GM12878 (cell line): ENCODE measurements at regions of chr3 and their contacts with region 1.

Region 1: DNA sequence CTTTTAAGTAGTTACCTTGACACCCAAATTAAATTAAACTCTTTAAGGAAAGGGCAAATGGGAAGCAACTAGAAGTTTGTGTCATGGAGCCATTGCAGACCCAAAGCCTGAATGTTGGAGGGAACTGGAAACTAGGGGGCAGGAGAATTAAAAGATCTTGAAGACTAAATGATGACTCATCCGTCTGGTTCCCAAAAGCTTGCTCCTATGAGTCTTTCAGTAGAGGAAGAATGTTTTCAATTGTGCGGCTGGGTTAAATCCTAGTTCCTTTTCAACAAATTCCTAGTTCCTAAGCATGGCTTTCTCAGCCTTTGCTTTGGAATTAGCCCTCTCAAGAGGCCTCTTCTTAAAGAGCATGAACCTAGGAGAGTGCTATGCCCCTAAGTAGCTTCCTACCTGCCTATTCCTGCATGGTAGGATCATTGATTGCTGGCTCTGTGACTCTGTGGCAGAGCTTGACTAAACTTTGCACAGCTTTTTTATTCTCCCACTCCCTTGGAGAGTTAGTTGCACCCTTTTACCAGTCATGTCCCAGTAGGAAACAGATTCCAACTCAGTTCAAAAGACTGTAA is 17.7 kb downstream of the CLEC3B start:
- DNase-seq: no peak
- ATAC-seq: no peak
- H3K4me3 ChIP-seq: no peak overlapping the region
- H3K27ac ChIP-seq: no peak overlapping the region
- H3K4me1 ChIP-seq: peaks cover 12% of the 10 kb centered on the region
- H3K27me3 ChIP-seq: no peaks in the 10 kb centered on the region
- CTCF ChIP-seq: no peak
- EP300 ChIP-seq: no peak
- POLR2A ChIP-seq: no peak
- RAD21 ChIP-seq: no peak

Region 2: DNA sequence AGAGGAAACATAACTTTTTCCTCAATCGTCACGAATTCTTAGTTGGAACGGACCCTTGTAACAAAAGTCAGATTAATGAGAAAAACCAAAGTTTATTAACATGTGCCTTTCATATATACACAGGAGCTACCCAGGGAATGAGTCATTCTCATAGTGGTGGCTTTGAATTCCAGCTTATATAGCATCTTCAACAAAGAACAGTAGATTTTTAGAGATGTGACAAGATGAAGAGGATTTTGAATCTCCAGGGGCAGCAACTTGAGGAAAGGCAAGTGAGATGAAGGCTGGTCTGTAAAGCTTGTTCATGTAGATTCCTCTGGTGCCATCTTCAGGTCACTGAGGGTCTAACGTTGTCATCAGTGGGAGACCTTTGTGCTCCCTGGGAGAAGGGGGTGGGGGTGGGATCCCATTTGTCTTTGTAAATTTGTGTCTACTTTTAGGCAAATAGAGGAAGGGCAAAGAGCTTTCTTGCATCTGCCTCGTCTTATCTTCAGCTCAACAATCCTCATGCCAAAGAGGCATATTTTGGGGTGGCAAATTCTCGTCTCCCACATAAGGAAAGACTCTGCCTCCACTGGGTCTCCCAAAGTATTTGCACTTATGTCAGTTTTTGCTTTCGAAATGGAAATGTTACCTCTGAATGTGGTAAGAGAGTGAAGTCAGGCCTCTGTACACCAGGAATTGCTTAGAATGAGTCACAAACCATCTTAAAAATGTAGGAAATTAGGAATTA is 11.8 kb after region 1 on chr3:
- CTCF ChIA-PET with region 1: interaction called, 282 read pairs
- POLR2A ChIA-PET with region 1: interaction called, 3 read pairs
- RAD21 ChIA-PET with region 1: interaction called, 101 read pairs
- SMC1A ChIA-PET with region 1: interaction called, 120 read pairs
- in situ Hi-C with region 1: no loop called
- intact Hi-C with region 1: no loop called
- DNase-seq: no peak
- ATAC-seq: peak; percentile 86
- H3K4me3 ChIP-seq: no peak overlapping the region
- H3K27ac ChIP-seq: no peak overlapping the region
- H3K4me1 ChIP-seq: no peaks in the 10 kb centered on the region
- H3K27me3 ChIP-seq: no peaks in the 10 kb centered on the region
- CTCF ChIP-seq: peak; percentile 36 to 49 (median 43); a peak in 4 of 6 replicates
- EP300 ChIP-seq: no peak
- POLR2A ChIP-seq: no peak
- RAD21 ChIP-seq: peak; percentile 55

Region 3: GRCh38 chr3:45095916-45096526 is 52.2 kb after region 1 on chr3:
- CTCF ChIA-PET with region 1: interaction called, 12 read pairs
- POLR2A ChIA-PET with region 1: no interaction called
- RAD21 ChIA-PET with region 1: no interaction called
- SMC1A ChIA-PET with region 1: interaction called, 13 read pairs
- in situ Hi-C with region 1: no loop called
- intact Hi-C with region 1: no loop called
- DNase-seq: no peak
- ATAC-seq: no peak
- H3K4me3 ChIP-seq: no peak overlapping the region
- H3K27ac ChIP-seq: no peak overlapping the region
- H3K4me1 ChIP-seq: no peaks in the 10 kb centered on the region
- H3K27me3 ChIP-seq: no peaks in the 10 kb centered on the region; a peak in 2 of 4 replicates
- CTCF ChIP-seq: no peak
- EP300 ChIP-seq: no peak
- POLR2A ChIP-seq: no peak
- RAD21 ChIP-seq: no peak

Region 4: DNA sequence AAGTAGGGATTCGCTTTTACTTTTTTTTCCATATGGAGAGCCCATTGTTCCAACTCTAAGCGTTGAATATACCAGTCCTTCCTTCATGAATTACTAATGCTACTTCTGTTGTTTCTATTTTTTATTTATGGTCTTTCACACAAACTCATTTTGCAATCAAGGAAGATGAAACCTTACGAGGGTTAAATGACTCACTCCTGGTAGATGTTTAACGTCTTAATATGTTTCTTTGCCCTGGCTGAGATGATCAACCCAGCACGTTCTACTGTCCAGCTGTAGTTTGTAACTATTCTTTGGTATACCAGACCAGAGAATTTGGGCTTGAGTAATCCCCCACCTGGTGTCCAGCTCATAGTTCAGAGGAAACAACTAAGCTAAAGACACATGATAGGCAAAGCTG is 79.2 kb after region 1 on chr3:
- CTCF ChIA-PET with region 1: interaction called, 23 read pairs
- POLR2A ChIA-PET with region 1: interaction called, 6 read pairs
- RAD21 ChIA-PET with region 1: interaction called, 22 read pairs
- SMC1A ChIA-PET with region 1: interaction called, 32 read pairs
- in situ Hi-C with region 1: no loop called
- intact Hi-C with region 1: no loop called
- DNase-seq: peak; percentile 62
- ATAC-seq: peak; percentile 91
- H3K4me3 ChIP-seq: no peak overlapping the region
- H3K27ac ChIP-seq: no peak overlapping the region
- H3K4me1 ChIP-seq: no peaks in the 10 kb centered on the region
- H3K27me3 ChIP-seq: no peaks in the 10 kb centered on the region
- CTCF ChIP-seq: 0 out of 6 replicates have a peak, but pooled peaks of 1 of the 3 experiments have one; percentile 1
- EP300 ChIP-seq: peak; percentile 27 to 50; a peak in 2 of 4 replicates
- POLR2A ChIP-seq: no peak
- RAD21 ChIP-seq: no peak

Region 5: DNA sequence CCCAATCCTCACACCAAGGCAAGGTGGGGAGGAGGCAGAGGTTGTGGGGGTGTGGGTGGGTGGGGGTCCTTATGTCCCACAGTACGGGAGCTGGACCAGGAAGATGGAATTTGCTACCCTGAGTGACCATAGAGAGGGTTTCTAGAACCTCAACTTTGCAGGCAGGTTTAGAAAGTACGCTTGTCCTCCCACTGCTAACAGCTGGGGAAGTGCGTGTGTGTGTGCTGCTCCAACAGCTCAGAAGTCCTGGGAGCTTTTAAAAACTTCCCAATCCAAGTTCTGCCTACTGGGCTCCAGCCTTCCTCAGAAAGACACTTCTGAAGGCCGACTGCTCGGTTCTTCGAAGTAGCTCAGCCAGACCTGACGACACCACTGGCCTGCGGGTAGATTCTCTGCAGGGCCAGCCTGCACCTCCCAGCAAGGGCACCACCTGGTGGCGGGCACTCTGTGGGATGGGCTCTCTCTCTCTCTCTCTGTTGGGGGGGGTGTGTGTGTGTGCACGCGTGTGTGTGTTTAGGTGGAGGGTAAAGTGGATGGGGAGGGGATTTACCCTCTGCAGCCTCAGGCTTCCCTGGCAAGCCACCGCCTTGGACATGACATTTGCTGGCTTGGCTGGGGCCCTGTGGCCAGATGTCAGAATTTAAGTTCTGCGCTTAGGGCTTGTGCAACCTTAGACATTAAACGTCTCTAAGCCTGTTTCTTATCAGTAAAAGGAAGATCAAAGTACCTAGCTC is 166.7 kb after region 1 on chr3:
- CTCF ChIA-PET with region 1: interaction called, 416 read pairs
- POLR2A ChIA-PET with region 1: interaction called, 13 read pairs
- RAD21 ChIA-PET with region 1: interaction called, 166 read pairs
- SMC1A ChIA-PET with region 1: interaction called, 241 read pairs
- in situ Hi-C with region 1: loop called (anchors 5 kb)
- intact Hi-C with region 1: loop called (anchors 1 kb)
- DNase-seq: no peak
- ATAC-seq: peak; percentile 98
- H3K4me3 ChIP-seq: no peak overlapping the region
- H3K27ac ChIP-seq: no peak overlapping the region
- H3K4me1 ChIP-seq: no peaks in the 10 kb centered on the region
- H3K27me3 ChIP-seq: peaks cover 2 to 3% of the 10 kb centered on the region in 2 experiments; a peak in 3 of 4 replicates
- CTCF ChIP-seq: peak; percentile 60 to 75 (median 70); a peak in 5 of 6 replicates
- EP300 ChIP-seq: no peak
- POLR2A ChIP-seq: no peak
- RAD21 ChIP-seq: peak; percentile 44

Region 6: DNA sequence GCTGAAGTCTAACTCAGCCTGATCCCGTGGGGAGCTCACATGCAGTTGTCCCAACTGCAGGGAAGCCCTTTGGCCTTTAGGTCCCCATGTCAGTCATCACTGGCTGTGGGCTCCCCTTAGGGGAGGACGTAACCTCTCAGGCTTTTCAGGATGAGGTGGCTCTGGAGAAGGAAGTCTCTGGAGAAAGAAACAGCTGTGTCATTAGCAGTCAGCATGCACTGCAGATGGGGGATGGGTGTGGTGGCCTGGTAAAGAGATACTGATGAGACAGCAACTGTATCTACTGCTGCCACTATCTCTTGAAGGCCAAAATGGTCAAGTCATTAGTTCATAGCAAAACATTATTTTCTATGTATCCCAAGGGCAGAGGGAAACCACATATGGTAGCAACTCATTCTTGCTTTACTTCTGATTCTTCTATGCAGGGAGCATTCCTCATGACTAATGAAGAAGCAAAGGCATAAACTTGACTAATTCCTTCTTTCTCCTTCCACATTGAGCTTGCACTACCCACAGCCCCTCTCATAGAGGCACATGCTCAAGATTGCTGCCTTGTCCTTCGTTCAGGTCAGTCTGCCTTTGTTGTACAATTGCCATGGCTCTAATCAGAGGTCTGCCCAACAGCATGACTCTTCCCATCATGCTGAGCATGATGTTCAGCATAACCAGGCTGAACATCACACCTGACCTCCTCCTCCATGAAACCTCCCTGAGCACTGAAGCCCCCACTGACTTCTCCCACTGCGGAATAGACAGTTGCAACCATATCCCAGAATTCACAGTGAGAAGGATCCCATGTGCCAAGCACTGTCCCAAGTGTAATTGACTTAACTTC is 230.1 kb after region 1 on chr3:
- CTCF ChIA-PET with region 1: interaction called, 17 read pairs
- POLR2A ChIA-PET with region 1: no interaction called
- RAD21 ChIA-PET with region 1: interaction called, 16 read pairs
- SMC1A ChIA-PET with region 1: interaction called, 8 read pairs
- in situ Hi-C with region 1: no loop called
- intact Hi-C with region 1: no loop called
- DNase-seq: no peak
- ATAC-seq: no peak
- H3K4me3 ChIP-seq: no peak overlapping the region
- H3K27ac ChIP-seq: no peak overlapping the region
- H3K4me1 ChIP-seq: peaks cover 3% of the 10 kb centered on the region; the same call in 1 of the 2 replicates
- H3K27me3 ChIP-seq: no peaks in the 10 kb centered on the region; a peak in 1 of 4 replicates
- CTCF ChIP-seq: no peak
- EP300 ChIP-seq: no peak
- POLR2A ChIP-seq: no peak
- RAD21 ChIP-seq: no peak

Region 7: GRCh38 chr3:45507820-45508317 is 464.1 kb after region 1 on chr3:
- CTCF ChIA-PET with region 1: interaction called, 36 read pairs
- POLR2A ChIA-PET with region 1: no interaction called
- RAD21 ChIA-PET with region 1: interaction called, 16 read pairs
- SMC1A ChIA-PET with region 1: interaction called, 17 read pairs
- in situ Hi-C with region 1: loop called (anchors 5 kb)
- intact Hi-C with region 1: no loop called
- DNase-seq: no peak
- ATAC-seq: no peak
- H3K4me3 ChIP-seq: no peak overlapping the region
- H3K27ac ChIP-seq: no peak overlapping the region
- H3K4me1 ChIP-seq: no peaks in the 10 kb centered on the region
- H3K27me3 ChIP-seq: no peaks in the 10 kb centered on the region
- CTCF ChIP-seq: no peak
- EP300 ChIP-seq: no peak
- POLR2A ChIP-seq: no peak
- RAD21 ChIP-seq: no peak